CD14-positive monocyte (primary cell): ENCODE measurements at regions of chr2 and their contacts with region 1.

Region 1: DNA sequence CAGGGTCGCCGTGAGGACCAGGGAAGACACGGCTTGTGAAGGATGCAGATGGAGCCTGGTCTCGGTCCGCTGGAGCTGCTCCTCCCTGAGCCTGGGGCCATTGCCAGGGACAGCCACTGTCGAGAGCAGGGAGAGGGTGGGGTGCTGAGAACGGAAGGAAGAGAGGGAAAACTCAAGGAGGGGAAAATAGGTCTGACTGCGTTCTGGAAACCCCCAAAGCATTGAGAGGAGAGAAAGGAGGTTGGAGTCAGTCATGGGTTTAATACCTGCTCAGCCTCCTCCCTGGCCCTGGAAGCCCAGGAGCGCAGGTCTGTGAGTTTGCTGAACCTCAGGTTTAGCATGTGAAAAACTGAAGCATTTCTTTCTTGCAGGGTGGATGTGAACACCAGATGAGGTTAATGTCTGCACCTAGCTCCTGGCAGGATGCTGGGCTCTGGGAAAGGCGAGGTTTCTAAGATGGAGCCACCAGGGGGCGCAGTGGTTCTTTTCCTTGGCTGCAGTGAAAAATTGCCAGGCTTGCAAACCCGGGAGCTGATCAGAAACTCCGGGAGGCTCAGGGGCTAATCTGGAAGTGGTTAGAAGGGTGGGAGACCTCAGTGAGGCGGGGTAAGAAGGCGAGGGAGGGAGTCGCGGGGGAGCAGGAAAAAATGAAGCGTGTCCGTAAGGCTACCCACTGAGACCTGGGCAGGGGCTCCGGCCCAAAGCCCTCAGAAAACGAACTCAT is 33.6 kb upstream of the RNF149 start:
- DNase-seq: peak; percentile 54 to 76 (median 69)
- H3K4me3 ChIP-seq: no peak overlapping the region
- H3K4me3 Mint-ChIP-seq: peak overlapping the region in 1 of 2 donors; percentile 65
- H3K27ac ChIP-seq: no peak overlapping the region
- H3K27ac Mint-ChIP-seq: peak overlapping the region in 2 of 7 donors; percentile 3 to 68
- H3K4me1 ChIP-seq: peaks cover 26 to 31% of the 10 kb centered on the region in 2 donors
- H3K4me1 Mint-ChIP-seq: peaks cover 25% of the 10 kb centered on the region
- H3K27me3 ChIP-seq: no peaks in the 10 kb centered on the region
- H3K27me3 Mint-ChIP-seq: peaks cover 0 to 7% (median 5%) of the 10 kb centered on the region in 3 donors
- CTCF ChIP-seq: peak; percentile 94

Region 2: GRCh38 chr2:101400048-101400447 is 58.0 kb after region 1 on chr2:
- intact Hi-C with region 1: loop called in 1 of 2 experiments (anchors 10 kb)
- DNase-seq: peak; percentile 40 to 82 (median 74)
- H3K4me3 ChIP-seq: no peak overlapping the region
- H3K4me3 Mint-ChIP-seq: peak overlapping the region in 1 of 2 donors; percentile 79
- H3K27ac ChIP-seq: no peak overlapping the region
- H3K27ac Mint-ChIP-seq: peak overlapping the region in 6 of 7 donors; percentile 14 to 63 (median 38)
- H3K4me1 ChIP-seq: peaks cover 27 to 33% of the 10 kb centered on the region in 2 donors
- H3K4me1 Mint-ChIP-seq: peaks cover 40% of the 10 kb centered on the region
- H3K27me3 ChIP-seq: no peaks in the 10 kb centered on the region
- H3K27me3 Mint-ChIP-seq: peaks cover 1 to 19% (median 10%) of the 10 kb centered on the region in 3 donors
- CTCF ChIP-seq: no peak

Region 3: DNA sequence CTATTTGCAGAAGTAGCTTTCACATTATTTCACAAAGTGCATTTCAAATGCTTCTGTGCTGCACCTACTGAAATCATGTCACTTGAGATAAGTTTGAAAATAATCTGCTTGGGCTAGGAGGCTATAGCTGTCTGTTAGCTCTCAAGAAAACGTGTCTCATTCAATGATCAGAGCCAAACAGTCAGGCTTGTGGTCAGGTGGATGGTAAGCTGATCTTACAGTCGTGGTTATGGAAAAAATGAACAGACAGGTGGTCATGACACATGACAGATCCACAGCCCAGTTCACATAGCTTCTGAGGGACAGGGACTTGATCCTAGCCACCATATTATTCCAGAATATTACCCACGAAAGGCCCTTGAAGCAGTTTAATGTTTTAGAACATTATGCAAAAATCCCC is 159.4 kb after region 1 on chr2:
- intact Hi-C with region 1: loop called in 1 of 2 experiments (anchors 10 kb)
- DNase-seq: no peak
- H3K4me3 ChIP-seq: no peak overlapping the region
- H3K4me3 Mint-ChIP-seq: no peak overlapping the region
- H3K27ac ChIP-seq: no peak overlapping the region
- H3K27ac Mint-ChIP-seq: no peak overlapping the region
- H3K4me1 ChIP-seq: peaks cover 18 to 23% of the 10 kb centered on the region in 2 donors
- H3K4me1 Mint-ChIP-seq: peaks cover 30% of the 10 kb centered on the region
- H3K27me3 ChIP-seq: no peaks in the 10 kb centered on the region
- H3K27me3 Mint-ChIP-seq: peaks cover 4 to 14% (median 8%) of the 10 kb centered on the region in 3 donors
- CTCF ChIP-seq: no peak